Caco-2 (cell line): ENCODE measurements at regions of chr12 and their contacts with region 1.

Region 1: DNA sequence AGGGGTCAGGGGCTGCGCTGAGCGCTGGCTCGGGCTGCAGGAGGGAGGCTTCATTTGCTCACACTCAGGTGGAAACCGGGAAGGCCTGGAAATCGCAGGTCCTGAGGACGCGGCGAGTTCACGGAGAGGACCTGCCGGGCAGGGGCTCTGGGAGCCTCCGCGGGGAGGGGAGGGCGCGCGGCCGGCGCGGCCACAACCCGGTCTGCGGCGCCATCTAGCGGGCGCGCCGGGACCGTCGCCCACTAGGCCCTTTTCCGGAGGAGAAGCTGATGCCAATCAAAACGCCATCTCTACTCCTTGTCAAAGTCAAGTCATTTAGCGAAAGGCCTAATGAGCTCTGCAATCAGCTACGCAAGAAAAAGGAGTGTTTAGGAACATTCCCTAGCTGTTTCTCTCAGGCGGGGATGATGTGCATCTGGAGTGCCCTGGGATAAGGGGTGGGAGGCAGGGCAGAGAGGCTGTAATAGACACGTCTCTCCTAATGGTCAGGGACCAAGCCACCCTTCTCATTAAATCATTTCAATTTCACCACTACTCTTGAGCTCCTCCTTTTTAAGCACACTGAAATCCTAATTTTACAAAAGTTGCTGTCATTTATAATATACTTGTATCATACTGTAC is 885.8 kb upstream of the TMEM132C start:
- DNase-seq: peak; percentile 51 to 75
- H3K4me3 ChIP-seq: no peak overlapping the region
- H3K4me3 Mint-ChIP-seq: peak overlapping the region; percentile 33
- H3K27ac Mint-ChIP-seq: no peak overlapping the region
- H3K4me1 ChIP-seq: no peaks in the 10 kb centered on the region
- H3K4me1 Mint-ChIP-seq: no peaks in the 10 kb centered on the region
- H3K27me3 ChIP-seq: no peaks in the 10 kb centered on the region
- H3K27me3 Mint-ChIP-seq: no peaks in the 10 kb centered on the region
- CTCF ChIP-seq: peak; percentile 55 to 82

Region 2: GRCh38 chr12:126926023-126926594 is 455.0 kb before region 1 on chr12:
- CTCF ChIA-PET with region 1: no interaction called
- POLR2A ChIA-PET with region 1: no interaction called
- intact Hi-C with region 1: loop called (anchors 5 kb)
- DNase-seq: no peak
- H3K4me3 ChIP-seq: no peak overlapping the region
- H3K4me3 Mint-ChIP-seq: no peak overlapping the region
- H3K27ac Mint-ChIP-seq: no peak overlapping the region
- H3K4me1 ChIP-seq: no peaks in the 10 kb centered on the region
- H3K4me1 Mint-ChIP-seq: no peaks in the 10 kb centered on the region
- H3K27me3 ChIP-seq: no peaks in the 10 kb centered on the region
- H3K27me3 Mint-ChIP-seq: no peaks in the 10 kb centered on the region
- CTCF ChIP-seq: no peak

Region 3: DNA sequence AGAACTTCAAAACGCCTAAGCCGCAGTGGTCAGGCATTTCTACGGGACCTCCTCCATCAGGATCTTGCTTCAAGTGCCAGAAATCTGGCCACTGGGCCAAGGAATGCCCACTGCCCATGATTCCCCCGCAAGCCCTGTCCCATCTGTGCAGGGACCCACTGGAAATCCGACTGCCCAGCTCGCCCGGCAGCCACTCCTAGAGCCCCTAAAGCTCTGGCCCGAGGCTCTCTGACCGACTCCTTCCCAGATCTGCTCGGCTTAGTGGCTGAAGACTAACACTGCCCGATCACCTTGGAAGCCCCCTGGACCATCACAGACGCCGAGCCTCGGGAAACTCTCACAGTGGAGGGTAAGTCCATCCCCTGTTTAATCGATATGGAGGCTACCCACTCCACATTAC is 227.2 kb before region 1 on chr12:
- CTCF ChIA-PET with region 1: no interaction called
- POLR2A ChIA-PET with region 1: no interaction called
- intact Hi-C with region 1: no loop called
- DNase-seq: no peak
- H3K4me3 ChIP-seq: no peak overlapping the region
- H3K4me3 Mint-ChIP-seq: no peak overlapping the region
- H3K27ac Mint-ChIP-seq: no peak overlapping the region
- H3K4me1 ChIP-seq: no peaks in the 10 kb centered on the region
- H3K4me1 Mint-ChIP-seq: no peaks in the 10 kb centered on the region
- H3K27me3 ChIP-seq: no peaks in the 10 kb centered on the region
- H3K27me3 Mint-ChIP-seq: no peaks in the 10 kb centered on the region
- CTCF ChIP-seq: no peak

Region 4: GRCh38 chr12:127343940-127344339 is 37.2 kb before region 1 on chr12:
- CTCF ChIA-PET with region 1: no interaction called
- POLR2A ChIA-PET with region 1: no interaction called
- intact Hi-C with region 1: no loop called
- DNase-seq: no peak
- H3K4me3 ChIP-seq: no peak overlapping the region
- H3K4me3 Mint-ChIP-seq: no peak overlapping the region
- H3K27ac Mint-ChIP-seq: no peak overlapping the region
- H3K4me1 ChIP-seq: no peaks in the 10 kb centered on the region
- H3K4me1 Mint-ChIP-seq: no peaks in the 10 kb centered on the region
- H3K27me3 ChIP-seq: no peaks in the 10 kb centered on the region
- H3K27me3 Mint-ChIP-seq: no peaks in the 10 kb centered on the region
- CTCF ChIP-seq: no peak